ENCODE measurements at regions of chr10 and their contacts with region 1.

Region 1: GRCh38 chr10:77710759-77711682 is 73.4 kb upstream of the KCNMA1 start:
- DNase-seq: peak; percentile 62 to 99
- H3K4me3 ChIP-seq: peak overlapping the region; percentile 10 to 56 (median 42); a peak in 7 of 8 replicates
- H3K27ac ChIP-seq: no peak overlapping the region
- H3K4me1 ChIP-seq: peaks cover 6 to 24% (median 20%) of the 10 kb centered on the region in 4 experiments
- H3K27me3 ChIP-seq: peaks cover 0 to 11% (median 0%) of the 10 kb centered on the region in 4 experiments; a peak in 4 of 7 replicates
- CTCF ChIP-seq: peak; percentile 96 to 100 (median 99)
- EP300 ChIP-seq: peak in 1 of 2 experiments; percentile 11; a peak in 1 of 3 replicates
- POLR2A ChIP-seq: no peak; a peak in 1 of 3 replicates
- RAD21 ChIP-seq: peak; percentile 82 to 93

Region 2: DNA sequence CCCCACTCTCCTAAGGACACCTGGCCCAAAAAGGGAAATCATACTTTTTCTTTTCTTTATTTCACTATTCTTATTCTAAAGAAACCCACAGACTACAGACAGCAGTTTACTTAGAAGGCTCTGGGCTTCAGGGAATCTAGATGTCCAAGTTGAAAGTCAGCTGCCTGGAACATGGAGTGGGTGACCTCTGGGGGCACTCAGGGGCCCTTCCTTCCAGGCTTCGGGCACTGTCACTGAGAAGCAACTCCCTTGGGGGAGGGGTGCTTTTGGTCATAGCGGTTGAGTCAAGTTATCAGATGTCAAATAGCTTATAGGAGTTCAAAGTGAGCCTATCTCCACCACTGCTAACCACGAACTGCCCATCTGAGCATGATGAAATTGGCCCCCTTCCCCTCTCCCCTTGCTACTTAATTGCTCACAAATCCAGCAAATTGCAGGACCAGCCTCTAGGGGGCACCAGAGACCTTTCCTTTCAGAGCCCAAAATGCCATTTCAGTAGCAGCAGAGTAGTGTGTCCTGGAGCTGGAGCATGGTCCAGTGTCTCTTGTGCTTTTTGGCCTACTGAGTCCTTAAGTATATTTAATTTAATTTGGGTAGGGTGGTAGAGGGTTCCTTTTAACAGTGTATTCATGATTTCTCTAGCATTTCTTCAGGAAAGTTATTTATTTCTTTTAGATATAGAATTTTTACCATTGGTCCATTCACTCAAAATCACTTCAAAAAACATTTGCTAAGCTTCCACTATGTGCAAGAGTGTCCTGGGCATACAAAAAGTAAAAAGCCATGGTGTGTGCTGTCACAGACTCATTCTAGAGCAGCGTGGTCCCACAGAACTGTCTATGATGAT is 537.2 kb before region 1 on chr10:
- CTCF ChIA-PET with region 1: interaction called, 10 read pairs
- POLR2A ChIA-PET with region 1: no interaction called
- DNase-seq: peak; percentile 72 to 91
- H3K4me3 ChIP-seq: no peak overlapping the region
- H3K27ac ChIP-seq: no peak overlapping the region
- H3K4me1 ChIP-seq: no peaks in the 10 kb centered on the region
- H3K27me3 ChIP-seq: no peaks in the 10 kb centered on the region
- CTCF ChIP-seq: peak; percentile 59 to 96 (median 92)
- EP300 ChIP-seq: no peak
- POLR2A ChIP-seq: no peak
- RAD21 ChIP-seq: peak; percentile 93 to 98

Region 3: GRCh38 chr10:77631241-77631640 is 79.8 kb before region 1 on chr10:
- CTCF ChIA-PET with region 1: interaction called, 14 read pairs
- POLR2A ChIA-PET with region 1: no interaction called
- DNase-seq: no peak
- H3K4me3 ChIP-seq: no peak overlapping the region
- H3K27ac ChIP-seq: no peak overlapping the region
- H3K4me1 ChIP-seq: peaks cover 2 to 17% (median 10%) of the 10 kb centered on the region in 4 experiments; a peak in 5 of 7 replicates
- H3K27me3 ChIP-seq: peaks cover under 1 to 10% (median 7%) of the 10 kb centered on the region in 4 experiments
- CTCF ChIP-seq: no peak
- EP300 ChIP-seq: no peak
- POLR2A ChIP-seq: no peak
- RAD21 ChIP-seq: no peak

Region 4: DNA sequence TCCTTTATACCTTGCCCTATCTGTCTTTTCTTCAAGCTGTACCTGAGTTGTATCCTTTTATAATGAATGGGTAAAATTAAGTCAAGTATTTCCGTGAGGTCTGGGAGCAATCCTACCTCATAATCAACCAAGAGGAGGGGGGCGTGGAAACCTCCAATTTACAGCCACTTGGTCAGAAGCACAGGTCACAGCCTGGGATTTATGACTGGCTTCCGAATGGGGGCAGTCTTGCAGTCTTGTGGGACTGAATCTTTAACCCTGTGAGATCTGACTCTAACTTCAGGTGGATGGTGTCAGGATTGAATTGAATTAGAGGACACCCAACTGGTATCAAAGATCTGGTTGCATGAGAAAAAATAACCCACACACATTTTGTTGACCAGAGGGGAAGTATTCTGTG is 49.9 kb before region 1 on chr10:
- CTCF ChIA-PET with region 1: interaction called, 26 read pairs
- POLR2A ChIA-PET with region 1: no interaction called
- DNase-seq: peak in 1 of 2 experiments; percentile 42
- H3K4me3 ChIP-seq: no peak overlapping the region
- H3K27ac ChIP-seq: no peak overlapping the region
- H3K4me1 ChIP-seq: peaks cover 0 to 8% (median 2%) of the 10 kb centered on the region in 4 experiments; a peak in 3 of 7 replicates
- H3K27me3 ChIP-seq: no peaks in the 10 kb centered on the region
- CTCF ChIP-seq: peak; percentile 28 to 52 (median 34); a peak in 3 of 4 replicates
- EP300 ChIP-seq: no peak
- POLR2A ChIP-seq: no peak
- RAD21 ChIP-seq: peak; percentile 24 to 33; a peak in 2 of 4 replicates

Region 5: DNA sequence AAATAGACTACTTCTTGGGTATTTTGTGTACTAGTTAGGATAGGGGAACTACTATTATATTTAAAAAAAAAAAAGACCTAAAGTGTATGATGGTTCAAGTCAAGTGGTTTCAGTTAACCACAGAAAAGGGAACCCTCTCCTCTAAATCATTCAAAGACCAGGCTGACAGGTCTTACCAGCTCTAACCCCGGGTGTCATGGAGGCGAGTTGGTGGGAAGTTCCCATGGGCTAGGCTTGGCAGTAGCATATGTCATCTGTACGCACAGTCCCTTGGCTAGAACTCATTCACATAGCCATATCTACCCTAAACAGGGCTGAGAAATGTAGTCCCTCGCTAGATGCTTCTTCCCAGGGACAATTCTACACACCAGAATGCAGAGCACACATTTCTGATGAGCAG is 35.7 kb before region 1 on chr10:
- CTCF ChIA-PET with region 1: interaction called, 10 read pairs
- POLR2A ChIA-PET with region 1: no interaction called
- DNase-seq: no peak
- H3K4me3 ChIP-seq: no peak overlapping the region
- H3K27ac ChIP-seq: no peak overlapping the region
- H3K4me1 ChIP-seq: peaks cover 0 to 6% (median 0%) of the 10 kb centered on the region in 4 experiments; a peak in 1 of 7 replicates
- H3K27me3 ChIP-seq: no peaks in the 10 kb centered on the region
- CTCF ChIP-seq: no peak
- EP300 ChIP-seq: no peak
- POLR2A ChIP-seq: no peak
- RAD21 ChIP-seq: no peak

Region 6: GRCh38 chr10:77692782-77693181 is 18.2 kb before region 1 on chr10:
- CTCF ChIA-PET with region 1: interaction called, 112 read pairs
- POLR2A ChIA-PET with region 1: interaction called, 3 read pairs
- DNase-seq: no peak
- H3K4me3 ChIP-seq: no peak overlapping the region
- H3K27ac ChIP-seq: no peak overlapping the region
- H3K4me1 ChIP-seq: no peaks in the 10 kb centered on the region
- H3K27me3 ChIP-seq: no peaks in the 10 kb centered on the region
- CTCF ChIP-seq: no peak
- EP300 ChIP-seq: no peak
- POLR2A ChIP-seq: no peak
- RAD21 ChIP-seq: no peak; a peak in 1 of 4 replicates

Region 7: DNA sequence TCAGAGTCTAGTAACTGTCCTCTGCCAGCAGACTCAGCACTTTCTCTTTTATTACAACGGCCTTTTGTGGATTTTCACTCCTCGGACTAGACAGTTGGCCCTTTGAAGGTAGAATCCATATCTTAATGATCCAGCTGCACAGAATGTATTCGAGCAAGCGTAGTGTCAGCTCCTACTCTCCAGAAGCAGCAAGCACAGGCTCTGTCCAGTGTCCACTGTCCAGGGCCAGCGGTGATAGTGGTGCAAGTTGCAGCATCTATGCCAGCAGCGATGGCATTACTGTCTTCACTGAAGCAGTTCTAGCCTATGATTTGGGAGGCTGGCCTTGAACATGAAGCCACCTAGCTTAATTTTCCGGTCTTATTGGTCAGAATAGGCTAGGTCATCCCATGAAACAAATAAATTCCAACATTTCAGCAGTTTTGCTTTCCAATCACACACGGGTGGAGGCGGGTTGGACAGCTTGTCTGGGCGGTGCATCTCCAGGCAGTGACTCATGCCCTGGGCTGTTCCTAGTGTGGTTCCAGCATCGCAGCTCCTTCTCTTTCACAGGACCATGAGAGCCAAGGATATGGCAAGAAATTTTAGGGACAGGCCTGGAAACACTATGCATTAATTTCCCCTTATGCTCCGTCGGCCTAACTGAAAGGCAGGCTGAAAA is 35.2 kb after region 1 on chr10:
- CTCF ChIA-PET with region 1: interaction called, 22 read pairs
- POLR2A ChIA-PET with region 1: no interaction called
- DNase-seq: no peak
- H3K4me3 ChIP-seq: no peak overlapping the region
- H3K27ac ChIP-seq: no peak overlapping the region
- H3K4me1 ChIP-seq: no peaks in the 10 kb centered on the region
- H3K27me3 ChIP-seq: peaks cover 0 to 3% (median 0%) of the 10 kb centered on the region in 4 experiments; a peak in 1 of 7 replicates
- CTCF ChIP-seq: no peak
- EP300 ChIP-seq: no peak
- POLR2A ChIP-seq: no peak
- RAD21 ChIP-seq: no peak

Region 8: GRCh38 chr10:77801474-77802161 is 90.6 kb after region 1 on chr10:
- CTCF ChIA-PET with region 1: no interaction called
- POLR2A ChIA-PET with region 1: no interaction called
- DNase-seq: no peak
- H3K4me3 ChIP-seq: no peak overlapping the region
- H3K27ac ChIP-seq: no peak overlapping the region
- H3K4me1 ChIP-seq: peaks cover 4 to 14% (median 8%) of the 10 kb centered on the region in 4 experiments; a peak in 5 of 7 replicates
- H3K27me3 ChIP-seq: no peaks in the 10 kb centered on the region
- CTCF ChIP-seq: no peak
- EP300 ChIP-seq: no peak
- POLR2A ChIP-seq: no peak
- RAD21 ChIP-seq: no peak

Region 9: DNA sequence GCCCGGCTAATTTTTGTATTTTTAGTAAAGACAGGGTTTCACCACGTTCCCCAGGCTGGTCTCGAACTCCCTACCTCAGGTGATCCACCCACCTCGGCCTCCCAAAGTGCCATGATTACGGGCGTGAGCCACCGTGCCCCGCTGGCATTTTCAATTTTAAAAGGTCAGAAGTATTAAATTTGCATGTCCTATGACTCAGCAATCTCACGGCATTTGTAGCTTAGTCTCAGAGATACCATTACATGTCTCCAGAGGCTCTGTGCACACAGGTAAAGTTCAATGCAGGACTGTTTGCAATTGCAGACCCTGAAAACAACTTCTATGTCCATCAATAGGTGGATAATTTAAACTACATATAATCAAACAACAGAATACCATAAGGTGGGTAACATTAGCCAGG is 116.4 kb after region 1 on chr10:
- CTCF ChIA-PET with region 1: no interaction called
- POLR2A ChIA-PET with region 1: no interaction called
- DNase-seq: no peak
- H3K4me3 ChIP-seq: no peak overlapping the region
- H3K27ac ChIP-seq: no peak overlapping the region
- H3K4me1 ChIP-seq: no peaks in the 10 kb centered on the region
- H3K27me3 ChIP-seq: no peaks in the 10 kb centered on the region
- CTCF ChIP-seq: no peak
- EP300 ChIP-seq: no peak
- POLR2A ChIP-seq: no peak
- RAD21 ChIP-seq: no peak

Measured in H1 (cell line).